ENCODE measurements at regions of chr11 and their contacts with region 1.

Region 1: DNA sequence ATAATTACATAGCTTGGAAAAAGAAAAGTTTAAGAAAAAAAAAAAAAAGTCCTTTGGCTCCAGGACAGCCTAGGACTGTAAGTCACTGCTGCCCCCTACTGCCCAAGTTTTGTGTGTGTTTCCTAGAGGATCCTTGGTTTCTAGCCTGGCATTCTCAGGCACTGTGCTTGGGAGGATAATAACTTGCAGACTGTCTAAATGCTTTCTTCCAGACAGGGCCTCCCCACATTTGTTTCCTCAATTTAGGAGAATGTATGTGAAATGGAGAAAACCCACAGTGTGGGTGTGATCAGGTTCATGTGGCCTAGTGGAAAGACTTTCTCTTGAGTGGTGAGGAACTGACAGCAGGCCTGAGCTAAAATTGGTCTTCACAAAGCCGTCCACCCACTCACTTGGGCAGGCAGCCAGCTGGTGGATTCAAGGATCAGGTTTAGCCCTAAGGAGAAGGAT is 191.0 kb downstream of the NAV2 start:
- DNase-seq: peak; percentile 50 to 90 (median 77)
- H3K4me3 ChIP-seq: no peak overlapping the region
- H3K27ac ChIP-seq: peak overlapping the region in 4 of 59 donors; percentile 14 to 63 (median 24)
- H3K27me3 ChIP-seq: no peaks in the 10 kb centered on the region
- CTCF ChIP-seq: peak; percentile 62 to 96 (median 88)

Region 2: DNA sequence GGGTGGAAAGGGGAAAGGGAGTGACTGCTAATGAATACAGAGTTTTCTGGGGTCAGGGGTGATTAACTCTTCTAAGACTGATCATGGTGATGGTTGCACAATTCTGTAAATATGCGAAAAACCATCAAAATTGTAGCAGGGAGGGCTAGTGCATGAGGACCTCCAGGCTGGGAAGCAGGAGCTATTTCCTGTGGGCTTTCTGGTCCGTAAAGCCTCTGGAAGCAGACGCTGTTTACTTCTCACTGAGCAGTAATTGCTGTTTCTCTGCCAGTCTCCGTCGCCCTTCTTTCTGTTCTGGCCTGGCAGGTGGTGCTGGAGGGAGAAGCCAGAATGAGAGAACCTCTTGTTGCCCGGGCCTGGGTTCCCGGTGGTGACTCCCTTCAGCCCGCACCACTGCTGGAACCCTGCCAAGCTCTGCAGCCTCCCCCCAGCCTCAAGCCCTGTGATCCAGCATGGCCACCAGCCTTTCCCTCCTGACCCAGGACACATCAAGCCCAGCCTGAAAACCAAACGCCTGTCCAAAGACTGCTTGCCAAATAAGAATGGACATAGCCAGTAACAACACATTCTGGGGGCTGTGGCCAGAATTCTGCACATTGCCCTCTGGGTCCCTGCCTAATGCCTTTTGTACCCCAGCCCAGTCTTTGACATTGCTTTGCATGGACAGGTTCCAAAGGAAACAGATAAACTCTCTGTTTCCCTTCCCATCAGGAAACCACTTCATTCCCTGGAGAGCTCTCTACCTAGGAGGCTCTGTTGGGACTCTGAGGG is 392.0 kb before region 1 on chr11:
- intact Hi-C with region 1: no loop called
- DNase-seq: peak; percentile 12 to 84 (median 67)
- H3K4me3 ChIP-seq: peak overlapping the region in 7 of 59 donors; percentile 5 to 39 (median 10)
- H3K27ac ChIP-seq: peak overlapping the region in 52 of 59 donors; percentile 0 to 87 (median 66)
- H3K27me3 ChIP-seq: no peaks in the 10 kb centered on the region
- CTCF ChIP-seq: no peak

Region 3: GRCh38 chr11:19553683-19554333 is 349.8 kb before region 1 on chr11:
- intact Hi-C with region 1: loop called in 1 of 2 experiments (anchors 1 kb)
- DNase-seq: peak; percentile 70 to 92 (median 87)
- H3K4me3 ChIP-seq: no peak overlapping the region
- H3K27ac ChIP-seq: peak overlapping the region in 20 of 59 donors; percentile 0 to 75 (median 32)
- H3K27me3 ChIP-seq: peaks cover 0 to 9% (median 0%) of the 10 kb centered on the region in 45 donors
- CTCF ChIP-seq: peak; percentile 82 to 99 (median 97)

Region 4: DNA sequence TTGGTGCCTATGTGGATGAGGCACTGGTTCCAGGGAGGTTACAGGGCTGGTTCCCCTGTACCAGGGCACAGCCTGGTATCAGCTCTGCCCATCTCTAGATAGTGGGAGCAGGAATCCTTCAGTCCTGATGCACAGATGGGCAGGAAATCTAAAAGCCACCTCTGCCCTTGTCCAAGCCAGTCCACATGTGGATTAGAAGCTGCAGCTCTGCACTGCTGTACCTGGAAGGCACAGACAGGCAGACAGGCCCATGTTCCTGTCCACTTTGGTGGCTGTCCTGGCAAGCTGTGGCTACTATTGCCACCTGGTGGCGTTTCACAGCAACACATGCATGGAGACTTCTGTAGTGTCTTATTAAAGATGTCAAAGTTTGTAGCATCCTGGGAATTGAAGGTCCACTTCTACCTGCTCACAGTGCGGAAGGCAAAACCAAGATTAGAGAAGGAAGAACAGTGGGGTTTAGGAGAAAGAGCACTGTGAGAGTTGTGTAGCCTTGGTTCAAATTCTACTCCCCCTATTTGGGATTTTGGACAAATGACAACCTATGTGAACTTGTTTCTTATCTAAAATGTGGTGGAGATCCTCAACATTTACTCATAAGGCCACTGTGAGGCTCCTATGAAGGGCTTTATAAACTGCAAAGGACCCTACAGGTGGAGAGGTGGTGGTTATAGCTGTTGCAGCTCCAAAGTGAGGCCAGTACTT is 160.9 kb before region 1 on chr11:
- intact Hi-C with region 1: loop called (anchors 2 to 5 kb)
- DNase-seq: peak; percentile 78 to 94 (median 87)
- H3K4me3 ChIP-seq: no peak overlapping the region
- H3K27ac ChIP-seq: peak overlapping the region in 17 of 59 donors; percentile 16 to 70 (median 30)
- H3K27me3 ChIP-seq: no peaks in the 10 kb centered on the region
- CTCF ChIP-seq: peak; percentile 89 to 99 (median 96)

Region 5: DNA sequence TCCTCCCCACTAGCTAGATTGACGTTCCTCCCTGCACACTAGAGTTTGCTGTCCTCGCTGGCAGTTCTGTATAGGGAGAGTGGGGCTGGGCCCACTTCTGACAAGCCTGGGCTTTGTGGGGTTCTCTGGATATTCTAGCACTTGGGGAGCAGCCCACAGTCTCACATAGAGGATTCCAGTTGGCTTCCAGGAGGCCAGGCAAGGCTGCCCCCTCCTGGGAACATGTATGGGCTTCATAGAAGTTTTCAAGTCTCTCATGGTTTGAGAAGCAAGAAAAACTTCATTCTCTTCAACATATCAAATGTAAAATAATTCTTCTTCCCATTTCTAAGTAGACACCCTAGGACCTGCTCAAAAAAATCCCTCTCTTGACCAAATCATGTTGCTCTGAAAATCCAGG is 103.5 kb before region 1 on chr11:
- intact Hi-C with region 1: no loop called
- DNase-seq: peak in 2 of 10 donors; percentile 43 to 53
- H3K4me3 ChIP-seq: no peak overlapping the region
- H3K27ac ChIP-seq: no peak overlapping the region
- H3K27me3 ChIP-seq: no peaks in the 10 kb centered on the region
- CTCF ChIP-seq: peak in 37 of 56 donors; percentile 7 to 56 (median 31)

Region 6: DNA sequence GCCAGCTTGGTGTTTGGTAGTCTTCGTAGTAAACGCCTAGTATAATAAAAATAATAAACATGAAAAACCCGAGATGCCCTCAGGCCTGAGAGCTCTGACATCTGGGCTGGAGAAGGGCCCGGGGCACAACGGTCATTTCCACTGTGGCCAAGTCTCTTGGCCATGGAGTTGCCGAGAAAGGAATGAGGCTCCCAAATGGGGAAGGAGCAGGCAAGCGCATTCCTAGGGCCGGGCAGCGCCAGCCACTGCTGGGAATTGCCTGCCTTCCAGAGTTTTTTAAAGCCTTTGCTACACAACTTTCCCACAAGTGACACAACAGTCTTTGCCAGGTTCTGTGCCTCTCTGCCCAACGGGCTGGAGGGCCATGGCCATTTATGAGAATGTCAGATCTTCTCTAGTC is 87.6 kb before region 1 on chr11:
- intact Hi-C with region 1: loop called in 1 of 2 experiments (anchors 5 kb)
- DNase-seq: peak in 2 of 10 donors; percentile 38 to 47
- H3K4me3 ChIP-seq: no peak overlapping the region
- H3K27ac ChIP-seq: peak overlapping the region in 12 of 59 donors; percentile 0 to 63 (median 9)
- H3K27me3 ChIP-seq: no peaks in the 10 kb centered on the region
- CTCF ChIP-seq: no peak

Region 7: DNA sequence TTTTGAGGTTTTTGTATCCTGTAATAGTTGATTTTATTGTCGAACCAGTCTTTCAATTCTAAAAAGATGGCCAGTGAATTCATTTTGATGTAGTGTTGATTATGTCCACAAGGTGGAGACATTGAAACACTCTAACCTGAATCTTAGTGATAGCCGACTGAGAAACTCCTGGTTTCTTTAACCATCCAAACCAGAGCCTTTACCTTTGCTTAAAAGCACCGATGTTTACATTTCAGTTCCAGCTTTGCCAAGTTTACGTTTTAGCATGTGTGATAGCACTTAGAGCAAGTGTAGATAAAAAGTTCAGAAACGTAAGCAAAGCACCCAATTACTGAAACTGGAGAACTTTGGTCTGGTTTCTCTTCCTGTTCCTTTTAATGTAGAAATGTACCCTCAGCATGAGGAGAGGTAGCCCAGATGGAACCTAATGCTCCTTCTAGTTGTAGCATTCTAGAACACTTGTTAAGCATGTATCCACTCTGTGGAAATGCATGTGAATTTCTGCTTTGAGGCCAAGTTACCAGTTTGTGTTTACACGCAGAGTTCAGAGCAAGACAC is 48.0 kb after region 1 on chr11:
- intact Hi-C with region 1: loop called (anchors 5 kb)
- DNase-seq: no peak
- H3K4me3 ChIP-seq: peak overlapping the region in 32 of 59 donors; percentile 1 to 47 (median 26)
- H3K27ac ChIP-seq: peak overlapping the region in 39 of 59 donors; percentile 1 to 80 (median 41)
- H3K27me3 ChIP-seq: no peaks in the 10 kb centered on the region
- CTCF ChIP-seq: peak; percentile 56 to 86 (median 76)

Region 8: GRCh38 chr11:20127671-20128527 is 224.3 kb after region 1 on chr11:
- intact Hi-C with region 1: loop called in 1 of 2 experiments (anchors 2 kb)
- DNase-seq: peak; percentile 76 to 88 (median 85)
- H3K4me3 ChIP-seq: no peak overlapping the region
- H3K27ac ChIP-seq: peak overlapping the region in 1 of 59 donors; percentile 4
- H3K27me3 ChIP-seq: no peaks in the 10 kb centered on the region
- CTCF ChIP-seq: peak; percentile 78 to 95 (median 89)